ENCODE measurements at regions of chr15 and their contacts with region 1.

Region 1: DNA sequence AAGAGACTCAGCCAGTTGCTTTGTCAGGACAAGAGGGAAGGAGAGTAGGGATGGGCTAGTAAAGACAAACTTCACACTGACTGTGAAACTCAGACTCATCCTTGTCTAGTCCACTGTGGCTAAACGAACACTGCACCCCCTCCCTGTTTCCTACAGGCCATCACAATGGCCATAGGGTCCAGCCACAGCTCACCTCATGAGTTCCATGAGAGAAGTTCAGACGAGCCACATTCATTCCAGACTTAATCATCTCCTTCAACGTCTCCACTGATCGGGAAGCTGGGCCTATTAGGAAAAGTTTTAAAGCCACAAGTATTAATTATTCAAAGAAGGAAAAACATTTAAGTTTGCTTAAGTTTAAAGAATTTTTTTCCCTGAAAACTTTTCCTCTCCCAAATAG is 13.8 kb downstream of the PKM start:
- DNase-seq: no peak
- CTCF ChIP-seq: no peak

Region 2: GRCh38 chr15:72199711-72200212 is 17.5 kb before region 1 on chr15:
- CTCF ChIA-PET with region 1: interaction called, 25 read pairs
- POLR2A ChIA-PET with region 1: no interaction called
- DNase-seq: peak; percentile 79
- CTCF ChIP-seq: peak; percentile 96

Region 3: GRCh38 chr15:72237286-72238224 is 20.3 kb after region 1 on chr15:
- CTCF ChIA-PET with region 1: no interaction called
- POLR2A ChIA-PET with region 1: no interaction called
- DNase-seq: peak; percentile 56
- CTCF ChIP-seq: no peak

Measured in GM10248 (cell line).